ENCODE measurements at regions of chr18 and their contacts with region 1.

Region 1: GRCh38 chr18:32552421-32553030 is 81.8 kb upstream of the GAREM1 start:
- DNase-seq: peak; percentile 34
- ATAC-seq: peak; percentile 67 to 79

Region 2: DNA sequence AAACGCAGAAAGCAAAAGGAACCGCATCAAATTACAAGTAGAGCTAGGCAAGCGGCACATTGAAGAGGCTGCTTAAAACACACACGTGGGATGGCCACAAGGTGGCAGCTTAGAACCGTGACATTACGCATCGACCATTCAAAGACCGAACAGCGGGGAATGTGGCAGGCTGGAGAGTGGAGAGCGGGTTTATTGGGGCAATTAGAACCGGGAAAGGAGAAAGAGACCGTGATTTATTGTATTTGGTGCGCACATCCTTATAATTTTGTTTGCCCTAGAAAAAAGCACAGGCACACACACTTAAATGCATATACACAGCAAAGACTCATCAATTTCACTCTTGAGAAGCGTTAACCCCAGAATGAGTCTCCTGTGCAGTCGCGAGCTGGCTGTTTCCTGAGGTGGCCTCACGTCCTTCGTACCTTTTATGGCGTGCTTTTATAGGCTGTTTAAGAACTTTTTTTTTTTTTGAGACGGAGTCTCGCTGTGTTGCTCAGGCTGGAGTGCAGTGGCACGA is 394.4 kb before region 1 on chr18:
- intact Hi-C with region 1: loop called (anchors 1 to 5 kb)
- DNase-seq: peak; percentile 77
- ATAC-seq: peak; percentile 98

Region 3: GRCh38 chr18:32271672-32272208 is 280.8 kb before region 1 on chr18:
- intact Hi-C with region 1: loop called in 1 of 2 experiments (anchors 2 kb)
- DNase-seq: no peak
- ATAC-seq: peak; percentile 62 to 79

Region 4: DNA sequence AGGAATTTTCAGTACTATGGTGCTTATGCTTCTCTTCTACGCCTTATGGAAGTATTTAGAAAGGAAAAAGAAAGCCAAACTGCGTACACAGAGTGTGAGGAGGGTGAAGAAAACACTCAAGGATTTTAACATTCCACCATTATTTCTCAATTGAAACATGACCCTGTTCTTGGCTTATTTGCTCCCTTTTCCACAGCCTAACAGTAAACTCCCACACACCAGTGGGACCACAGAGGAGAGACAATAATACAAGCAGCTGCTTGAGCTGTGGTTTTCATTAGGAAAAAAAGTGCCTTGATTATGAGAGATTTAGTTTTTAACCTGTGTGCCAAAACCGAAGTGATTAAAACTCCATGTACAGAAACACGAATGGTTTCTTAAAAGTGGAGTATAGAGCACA is 228.3 kb before region 1 on chr18:
- intact Hi-C with region 1: no loop called
- DNase-seq: no peak
- ATAC-seq: peak; percentile 73 to 77

Region 5: GRCh38 chr18:32509111-32509510 is 43.4 kb before region 1 on chr18:
- intact Hi-C with region 1: loop called in 1 of 2 experiments (anchors 10 kb)
- DNase-seq: no peak
- ATAC-seq: no peak

Measured in left cardiac atrium (tissue), 4 donors.